ENCODE measurements at regions of chr12 and their contacts with region 1.

Region 1: GRCh38 chr12:12327802-12328201 is 22.2 kb downstream of the MANSC1 start:
- DNase-seq: peak; percentile 69 to 79 (median 78)
- H3K4me3 ChIP-seq: no peak overlapping the region
- H3K27ac ChIP-seq: no peak overlapping the region
- H3K4me1 ChIP-seq: peaks cover 0 to 4% (median 0%) of the 10 kb centered on the region in 4 experiments
- H3K27me3 ChIP-seq: no peaks in the 10 kb centered on the region

Region 2: GRCh38 chr12:12032851-12033588 is 294.8 kb before region 1 on chr12:
- CTCF ChIA-PET with region 1: interaction called, 10 read pairs
- POLR2A ChIA-PET with region 1: no interaction called
- DNase-seq: peak; percentile 77 to 84 (median 77)
- H3K4me3 ChIP-seq: peak overlapping the region; percentile 46 to 81 (median 62)
- H3K27ac ChIP-seq: no peak overlapping the region
- H3K4me1 ChIP-seq: peaks cover 4 to 33% (median 20%) of the 10 kb centered on the region in 4 experiments
- H3K27me3 ChIP-seq: no peaks in the 10 kb centered on the region

Region 3: DNA sequence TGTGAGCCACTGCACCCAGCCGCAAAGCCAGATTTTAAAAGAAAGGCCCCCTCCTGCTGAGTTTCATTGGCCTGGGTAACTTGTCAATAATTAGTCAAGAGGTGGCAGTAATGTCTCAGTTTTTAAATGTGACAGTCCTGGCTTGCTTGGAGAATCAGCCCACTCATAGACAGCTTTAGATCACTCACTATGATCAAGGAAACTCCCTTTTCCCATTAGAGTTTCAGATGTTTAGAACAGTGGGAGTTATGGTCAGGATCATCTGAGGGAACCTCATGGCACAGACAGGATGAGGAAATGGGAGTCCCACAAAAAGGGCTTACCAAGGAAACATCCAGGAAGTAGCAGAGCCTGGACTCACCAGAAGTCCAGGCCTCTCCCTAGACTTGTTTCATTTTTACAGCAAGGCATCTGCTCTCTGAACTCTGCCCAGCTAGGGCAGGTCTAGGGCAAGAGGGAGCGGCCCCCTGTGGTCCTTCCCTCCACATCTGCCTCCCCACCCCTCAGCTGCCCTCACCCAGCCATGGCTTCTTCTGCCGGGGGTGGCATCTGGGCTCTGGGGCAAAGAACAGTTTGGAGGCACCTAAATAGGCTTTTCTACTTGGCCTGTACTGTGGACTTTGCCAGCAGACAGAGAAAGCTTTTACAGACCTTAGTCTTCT is 245.8 kb before region 1 on chr12:
- CTCF ChIA-PET with region 1: interaction called, 24 read pairs
- POLR2A ChIA-PET with region 1: no interaction called
- DNase-seq: peak; percentile 22 to 40 (median 38)
- H3K4me3 ChIP-seq: no peak overlapping the region
- H3K27ac ChIP-seq: no peak overlapping the region
- H3K4me1 ChIP-seq: no peaks in the 10 kb centered on the region
- H3K27me3 ChIP-seq: no peaks in the 10 kb centered on the region

Measured in common myeloid progenitor, CD34-positive (primary cell).